GM18951 (cell line): ENCODE measurements at regions of chr3 and their contacts with region 1.

Region 1: GRCh38 chr3:171772427-171773056 is 37.7 kb downstream of the PLD1 start:
- POLR2A ChIP-seq: no peak

Region 2: DNA sequence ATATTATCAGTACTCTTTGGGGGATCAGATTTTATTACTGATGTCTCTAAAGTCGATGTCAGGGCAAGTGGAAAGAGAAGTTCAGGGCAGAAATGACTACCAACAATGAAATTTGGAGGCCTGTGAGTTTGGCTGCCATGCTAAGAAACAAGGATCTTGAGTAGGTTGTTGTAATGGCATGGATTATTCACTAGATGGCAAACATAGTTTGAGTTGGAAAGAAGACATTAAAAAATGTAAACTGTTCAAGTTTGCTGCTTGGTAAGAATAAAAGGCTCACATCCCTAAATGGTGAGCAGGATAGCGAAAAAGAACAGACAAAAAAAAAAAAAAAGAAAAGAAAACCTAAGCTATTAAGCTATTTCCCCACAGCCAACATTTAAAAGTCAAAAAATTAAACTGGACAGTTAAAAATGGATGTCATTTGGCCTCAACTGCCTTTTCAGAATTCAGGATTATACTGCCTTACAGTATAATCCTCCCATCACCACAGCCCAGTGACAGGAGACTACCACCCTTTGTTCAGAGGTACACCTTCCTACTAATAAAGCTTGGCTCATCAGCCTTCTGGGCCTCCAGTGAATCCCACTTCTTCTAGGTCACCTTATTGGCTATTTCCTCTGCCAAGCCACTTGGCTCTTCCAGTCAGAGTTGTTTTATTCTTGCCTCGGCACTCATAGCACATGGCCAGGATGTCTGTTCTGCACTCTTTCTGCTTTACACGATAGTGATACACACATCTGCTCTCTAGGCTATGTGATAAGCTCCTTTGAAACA is 126.0 kb before region 1 on chr3:
- in situ Hi-C with region 1: loop called (anchors 10 kb)
- POLR2A ChIP-seq: no peak

Region 3: DNA sequence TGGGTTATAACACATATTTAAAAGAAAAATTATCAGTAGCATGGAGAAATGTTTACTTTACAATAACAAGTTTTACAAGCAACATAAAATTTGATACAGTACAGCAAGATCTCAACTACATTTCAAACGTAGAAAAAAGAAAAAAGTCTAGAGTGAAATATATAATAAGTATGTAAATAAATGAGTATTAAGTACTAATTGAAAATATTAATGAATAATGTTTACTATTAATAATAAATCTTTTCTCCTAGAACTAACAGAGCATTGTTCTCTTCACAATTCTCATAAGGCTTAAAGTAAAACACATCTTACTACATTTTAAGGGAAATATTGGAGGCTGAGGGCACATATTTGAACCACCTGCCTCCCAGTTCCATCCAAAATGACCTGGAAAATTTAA is 142.7 kb after region 1 on chr3:
- in situ Hi-C with region 1: no loop called
- POLR2A ChIP-seq: no peak